HEK293 (cell line): ENCODE measurements at regions of chrX and their contacts with region 1.

Region 1: DNA sequence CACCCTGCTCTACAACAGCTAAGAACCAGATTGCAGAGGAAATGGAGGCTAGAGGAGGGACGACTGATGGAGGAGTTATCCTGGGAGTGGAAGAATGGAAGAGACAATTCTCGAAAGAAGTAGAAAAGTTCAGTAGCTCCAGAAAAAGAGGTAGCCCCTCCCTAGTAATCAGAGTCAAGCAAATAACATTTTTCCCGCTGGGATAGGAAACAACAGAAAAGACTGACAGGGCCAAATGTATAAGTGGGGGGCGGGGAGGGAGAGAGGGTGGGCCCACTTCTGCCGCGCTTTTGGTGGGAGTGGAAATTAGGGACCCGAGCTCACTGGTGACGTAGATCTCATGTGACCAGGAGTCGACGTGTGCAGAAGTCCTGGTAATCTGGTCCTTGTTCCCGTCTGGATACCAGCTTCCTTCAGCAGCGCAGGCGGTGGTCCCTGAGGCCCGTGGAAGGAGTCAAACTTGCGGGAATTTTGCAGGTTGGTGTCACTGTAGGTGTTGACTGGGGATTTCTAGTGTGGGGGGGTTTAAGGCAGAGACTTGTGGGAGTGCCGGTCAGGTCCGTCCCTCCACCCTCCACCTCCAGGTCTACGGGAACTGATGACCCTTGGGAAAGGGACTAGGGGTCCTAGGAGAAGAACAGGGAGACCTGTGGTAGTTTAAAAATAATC is at the start of gene TCEAL9:
- H3K4me3 ChIP-seq: peak within 1 kb of the TSS; percentile 59
- H3K27ac ChIP-seq: peak within 1 kb of the TSS; percentile 53
- H3K4me1 ChIP-seq: no peaks in the 10 kb centered on the region
- CTCF ChIP-seq: no peak

Region 2: GRCh38 chrX:103063918-103064434 is 292.3 kb before region 1 on chrX and contains the start of gene BEX1:
- CTCF ChIA-PET with region 1: no interaction called
- POLR2A ChIA-PET with region 1: no interaction called
- H3K4me3 ChIP-seq: peak within 1 kb of the TSS; percentile 36
- H3K27ac ChIP-seq: no peak within 1 kb of the TSS
- H3K4me1 ChIP-seq: no peaks in the 10 kb centered on the region
- CTCF ChIP-seq: no peak

Region 3: DNA sequence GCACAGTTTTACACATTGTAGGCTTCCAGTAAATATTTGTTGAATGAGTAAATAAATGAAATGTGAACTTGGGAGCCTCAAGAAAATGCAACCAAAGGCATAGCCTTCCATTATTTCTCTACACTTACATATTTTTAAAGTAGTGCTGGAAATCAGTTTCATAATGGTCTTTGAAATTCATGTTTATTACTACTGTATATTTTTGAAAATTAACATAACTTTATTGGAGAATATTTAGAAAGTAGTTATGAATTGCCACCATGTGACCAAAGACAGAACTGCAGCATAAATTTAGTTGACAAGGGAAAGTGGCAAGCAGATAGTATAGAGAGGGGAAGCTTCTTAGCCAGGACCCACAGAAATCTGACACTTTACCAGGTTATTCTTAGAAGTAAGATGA is 107.7 kb before region 1 on chrX:
- CTCF ChIA-PET with region 1: no interaction called
- POLR2A ChIA-PET with region 1: no interaction called
- H3K4me3 ChIP-seq: no peak overlapping the region
- H3K27ac ChIP-seq: no peak overlapping the region
- H3K4me1 ChIP-seq: no peaks in the 10 kb centered on the region
- CTCF ChIP-seq: no peak

Region 4: GRCh38 chrX:103293118-103293517 is 63.1 kb before region 1 on chrX:
- CTCF ChIA-PET with region 1: no interaction called
- POLR2A ChIA-PET with region 1: no interaction called
- H3K4me3 ChIP-seq: no peak overlapping the region
- H3K27ac ChIP-seq: no peak overlapping the region
- H3K4me1 ChIP-seq: no peaks in the 10 kb centered on the region
- CTCF ChIP-seq: no peak

Region 5: DNA sequence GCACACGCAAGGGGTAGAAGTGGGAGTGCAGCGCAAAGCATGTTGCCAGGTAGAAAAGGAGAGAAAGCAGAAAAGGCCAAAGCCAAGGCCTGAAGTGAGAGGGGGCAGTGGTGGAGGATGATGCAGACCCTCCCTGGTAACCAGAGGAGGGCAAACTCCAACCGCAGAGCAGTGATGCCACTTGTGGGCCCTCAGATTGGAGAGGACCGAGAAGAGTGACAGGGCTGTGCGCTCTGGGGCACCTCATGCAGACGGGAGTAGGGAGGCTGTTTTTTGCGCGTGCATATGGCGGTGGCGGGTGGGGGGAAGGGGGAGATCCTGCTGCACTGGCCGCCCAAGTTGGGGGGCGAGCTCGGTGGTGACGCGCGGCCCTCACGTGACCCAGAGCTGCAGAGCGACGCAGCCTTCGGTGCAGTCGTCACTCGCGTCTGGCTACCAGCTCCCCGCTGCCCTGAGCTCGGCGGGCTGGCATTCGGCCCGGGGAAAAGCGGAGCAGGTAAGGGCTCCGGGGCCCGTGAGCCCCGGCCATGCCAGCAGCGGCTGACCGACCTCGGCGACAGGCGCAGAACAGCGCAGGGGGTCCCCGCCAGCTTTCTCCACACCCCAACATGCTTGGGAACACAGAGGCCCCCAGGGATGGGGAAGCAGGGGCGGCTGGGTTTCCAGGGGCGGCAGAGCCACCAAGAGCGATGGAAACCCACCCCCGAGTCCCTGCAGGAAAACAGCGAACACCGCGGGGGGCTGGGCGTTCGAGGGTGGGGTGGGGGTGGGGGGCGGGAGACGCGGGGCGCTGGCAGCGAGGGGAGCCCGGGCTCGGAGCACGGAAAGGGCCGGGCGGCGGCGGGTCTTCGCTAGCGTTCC is 20.1 kb after region 1 on chrX and contains the start of gene BEX3:
- CTCF ChIA-PET with region 1: interaction called, 5 read pairs
- POLR2A ChIA-PET with region 1: interaction called, 12 read pairs
- H3K4me3 ChIP-seq: peak within 1 kb of the TSS; percentile 77
- H3K27ac ChIP-seq: peak within 1 kb of the TSS; percentile 80
- H3K4me1 ChIP-seq: no peaks in the 10 kb centered on the region
- CTCF ChIP-seq: peak; percentile 32; the same call in 1 of the 2 replicates

Region 6: DNA sequence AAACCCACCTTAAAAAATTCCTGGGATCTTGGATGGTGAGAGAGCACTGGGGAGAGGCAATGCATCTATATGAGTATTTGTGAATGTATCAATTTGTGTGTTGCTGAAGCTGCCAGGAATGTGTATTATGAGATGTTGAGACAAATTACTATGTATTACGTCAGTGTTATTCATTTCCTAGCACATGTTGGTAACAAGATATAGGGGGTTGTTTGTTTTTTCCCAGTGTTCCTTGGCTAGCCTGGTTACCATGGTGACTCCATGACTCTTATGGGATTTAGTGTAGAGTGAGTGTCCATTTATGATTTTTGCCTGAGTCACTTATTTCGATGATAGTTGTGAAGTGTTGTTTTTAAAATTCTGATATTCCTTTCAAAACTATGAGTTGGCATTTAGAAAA is 97.4 kb after region 1 on chrX:
- CTCF ChIA-PET with region 1: no interaction called
- POLR2A ChIA-PET with region 1: no interaction called
- H3K4me3 ChIP-seq: no peak overlapping the region
- H3K27ac ChIP-seq: no peak overlapping the region
- H3K4me1 ChIP-seq: no peaks in the 10 kb centered on the region
- CTCF ChIP-seq: no peak